Brain microvascular endothelial cell (primary cell): ENCODE measurements at regions of chr7 and their contacts with region 1.

Region 1: DNA sequence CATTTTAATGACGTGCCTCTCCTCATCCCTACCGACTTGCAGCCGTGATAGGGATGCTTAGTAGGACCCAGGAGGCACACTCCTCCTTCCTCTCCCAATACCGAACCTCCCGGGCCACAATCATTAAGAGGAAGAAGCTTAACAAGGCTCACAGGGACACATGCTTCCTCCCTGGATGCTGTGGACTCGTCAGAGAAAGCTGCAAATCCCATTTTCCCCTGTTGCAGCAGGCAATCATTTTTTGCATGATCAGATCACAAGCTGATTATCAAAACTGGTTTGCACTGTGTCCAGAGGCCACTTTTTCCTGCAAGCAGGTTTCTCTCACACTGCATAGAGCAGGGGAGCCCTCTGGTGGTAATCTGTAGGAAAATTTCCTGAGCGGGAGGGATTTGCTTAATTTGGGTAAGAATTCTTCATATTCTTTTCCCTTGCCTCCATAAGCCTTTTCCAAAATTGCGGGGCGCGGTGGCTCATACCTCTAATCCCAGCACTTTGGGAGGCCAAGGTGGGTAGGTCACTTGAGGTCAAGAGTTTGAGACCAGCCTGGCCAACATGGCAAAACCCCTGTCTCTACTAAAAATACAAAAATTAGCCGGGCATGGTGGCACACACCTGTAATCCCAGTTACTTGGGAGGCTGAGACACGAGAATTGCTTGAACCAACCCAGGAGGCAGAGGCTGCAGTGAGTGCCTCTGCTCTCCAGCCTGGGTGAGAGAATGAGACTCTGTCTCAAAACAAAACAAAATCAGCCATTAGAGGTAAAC is 16.1 kb upstream of the LAMB4 start:
- DNase-seq: peak; percentile 72
- H3K4me3 ChIP-seq: peak overlapping the region; percentile 43
- H3K27ac ChIP-seq: no peak overlapping the region
- H3K27me3 ChIP-seq: no peaks in the 10 kb centered on the region
- CTCF ChIP-seq: peak; percentile 92

Region 2: GRCh38 chr7:108016841-108017775 is 129.1 kb before region 1 on chr7:
- in situ Hi-C with region 1: loop called (anchors 25 kb)
- DNase-seq: peak; percentile 67
- H3K4me3 ChIP-seq: no peak overlapping the region
- H3K27ac ChIP-seq: no peak overlapping the region
- H3K27me3 ChIP-seq: no peaks in the 10 kb centered on the region
- CTCF ChIP-seq: peak; percentile 67

Region 3: DNA sequence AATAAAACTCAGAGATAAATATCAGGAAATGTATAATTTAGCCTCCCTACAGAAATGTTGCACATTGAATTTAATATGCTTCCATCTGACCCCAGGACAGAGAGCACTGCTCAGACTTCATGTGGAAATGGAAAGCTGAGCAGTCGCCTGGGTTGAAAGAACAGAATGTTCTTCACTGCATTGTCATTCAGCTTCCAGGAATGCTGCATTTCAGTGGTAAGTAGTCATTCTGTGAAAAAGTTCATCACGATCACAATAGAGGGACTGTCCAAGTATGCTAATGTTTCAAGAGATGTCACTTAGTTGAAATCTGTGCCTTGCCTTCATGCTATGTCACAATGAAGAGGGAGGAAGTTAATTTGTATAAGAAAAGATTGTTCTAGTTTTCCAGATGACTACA is 162.6 kb after region 1 on chr7:
- in situ Hi-C with region 1: no loop called
- DNase-seq: peak; percentile 73
- H3K4me3 ChIP-seq: no peak overlapping the region
- H3K27ac ChIP-seq: peak overlapping the region; percentile 86
- H3K27me3 ChIP-seq: no peaks in the 10 kb centered on the region
- CTCF ChIP-seq: no peak

Region 4: GRCh38 chr7:108415821-108416536 is 269.7 kb after region 1 on chr7:
- in situ Hi-C with region 1: no loop called
- DNase-seq: peak; percentile 85
- H3K4me3 ChIP-seq: no peak overlapping the region
- H3K27ac ChIP-seq: peak overlapping the region; percentile 43
- H3K27me3 ChIP-seq: no peaks in the 10 kb centered on the region
- CTCF ChIP-seq: no peak